ENCODE measurements at regions of chr4 and their contacts with region 1.

Region 1: DNA sequence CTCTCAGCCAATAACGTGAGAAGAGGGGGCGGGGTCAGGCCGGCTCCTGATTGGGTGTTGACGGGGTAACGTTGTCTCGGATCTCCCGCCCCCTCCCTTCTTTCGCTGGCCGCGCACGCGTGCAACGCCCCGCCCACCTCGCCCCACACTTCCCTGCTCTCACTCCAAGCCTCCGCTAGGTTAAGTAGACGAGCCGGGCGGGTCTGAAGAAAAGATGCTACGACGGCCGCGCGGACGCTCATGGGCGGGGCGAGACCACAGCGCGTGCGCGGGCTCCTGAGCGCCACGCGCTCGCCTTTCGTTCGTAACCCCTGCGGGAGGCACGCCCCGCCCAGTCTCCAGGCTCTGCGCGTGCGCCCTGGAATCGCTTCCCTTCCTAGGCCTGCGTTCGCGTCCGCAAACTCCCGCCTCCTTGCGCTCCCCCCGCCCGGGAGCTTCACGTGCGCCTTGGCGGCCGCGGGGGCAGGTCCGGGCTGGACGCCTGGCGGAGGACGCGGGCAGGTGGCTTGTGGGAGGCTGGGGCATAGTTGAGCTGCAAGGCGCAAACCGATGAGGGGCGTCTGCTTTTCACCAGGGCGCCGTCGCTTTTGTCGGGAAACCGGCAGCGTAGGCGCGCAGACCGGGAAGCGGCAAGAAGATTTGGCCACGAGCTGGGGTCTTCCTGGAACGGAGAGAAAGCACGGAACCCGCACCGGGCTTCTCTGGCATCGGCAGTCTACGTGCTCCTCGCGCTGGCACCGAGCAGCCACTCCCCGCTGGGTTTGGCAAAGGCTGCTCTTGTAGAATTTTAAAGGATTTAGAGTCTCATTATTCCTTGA is 467 bp upstream of the PGRMC2 start:
- DNase-seq: peak; percentile 89 to 97
- H3K4me3 ChIP-seq: peak overlapping the region; percentile 87
- H3K27ac ChIP-seq: peak overlapping the region; percentile 88
- H3K4me1 ChIP-seq: peaks cover 28% of the 10 kb centered on the region
- H3K27me3 ChIP-seq: no peaks in the 10 kb centered on the region
- CTCF ChIP-seq: no peak; the same call in 1 of the 2 replicates

Region 2: GRCh38 chr4:128060699-128061565 is 227.1 kb before region 1 on chr4 and contains the start of gene LARP1B:
- CTCF ChIA-PET with region 1: no interaction called
- POLR2A ChIA-PET with region 1: no interaction called
- intact Hi-C with region 1: loop called (anchors 1 kb)
- DNase-seq: peak; percentile 82 to 98
- H3K4me3 ChIP-seq: peak within 1 kb of the TSS; percentile 88
- H3K27ac ChIP-seq: peak within 1 kb of the TSS; percentile 93
- H3K4me1 ChIP-seq: peaks cover 4% of the 10 kb centered on the region; the same call in 1 of the 2 replicates
- H3K27me3 ChIP-seq: no peaks in the 10 kb centered on the region
- CTCF ChIP-seq: no peak
- total RNA-seq, gene LARP1B: 17.7 and 22.0 TPM in 2 replicates

Region 3: DNA sequence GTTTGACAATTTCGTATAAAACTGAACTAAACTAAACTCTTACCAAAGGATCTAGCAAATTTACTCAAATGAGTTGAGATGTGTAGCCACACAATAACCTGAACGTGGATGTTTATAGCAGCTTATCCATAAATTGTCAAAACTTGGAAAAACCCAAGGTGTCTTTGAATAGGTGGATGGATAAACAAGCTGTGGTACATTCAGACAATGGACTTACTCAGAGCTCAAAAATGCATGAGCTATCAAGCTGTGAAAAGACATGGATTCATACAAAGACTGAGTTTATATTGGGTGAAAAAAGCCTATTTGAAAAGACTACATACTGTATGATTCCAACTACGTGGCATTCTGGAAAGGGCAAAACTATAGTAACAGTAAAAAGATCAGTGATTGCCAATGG is 157.5 kb before region 1 on chr4:
- CTCF ChIA-PET with region 1: no interaction called
- POLR2A ChIA-PET with region 1: no interaction called
- intact Hi-C with region 1: no loop called
- DNase-seq: no peak
- H3K4me3 ChIP-seq: no peak overlapping the region
- H3K27ac ChIP-seq: no peak overlapping the region
- H3K4me1 ChIP-seq: no peaks in the 10 kb centered on the region
- H3K27me3 ChIP-seq: no peaks in the 10 kb centered on the region
- CTCF ChIP-seq: no peak

Region 4: DNA sequence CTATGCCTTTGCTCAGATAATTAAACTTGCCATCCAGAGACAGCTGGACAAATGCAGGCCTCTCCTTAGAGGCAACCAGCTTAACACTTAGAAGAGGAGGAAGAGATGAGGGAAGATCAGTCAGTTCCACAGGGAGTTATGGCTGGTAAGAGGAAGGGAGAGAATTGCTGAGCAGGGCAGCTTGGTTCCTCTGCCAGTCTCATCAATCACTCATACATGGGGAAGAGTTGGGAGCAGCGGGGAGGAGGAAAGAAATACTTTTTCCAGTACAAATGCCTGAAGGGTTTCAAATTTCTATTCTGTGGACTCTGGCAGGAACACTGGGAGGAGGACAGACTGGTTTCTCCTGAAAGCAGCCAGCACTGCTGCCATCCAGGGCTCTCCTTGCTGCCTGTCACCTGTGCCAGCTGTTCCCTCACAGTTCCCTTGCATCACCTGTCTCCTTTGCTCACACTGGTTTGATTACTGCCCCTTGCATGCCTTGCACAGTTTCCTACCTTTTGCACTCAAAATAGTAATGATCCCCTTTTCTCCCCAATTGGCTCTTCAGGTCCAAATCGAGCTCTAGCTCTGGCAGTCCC is 60.0 kb before region 1 on chr4:
- CTCF ChIA-PET with region 1: no interaction called
- POLR2A ChIA-PET with region 1: interaction called, 20 read pairs
- intact Hi-C with region 1: loop called (anchors 1 kb)
- DNase-seq: peak; percentile 73 to 76
- H3K4me3 ChIP-seq: no peak overlapping the region
- H3K27ac ChIP-seq: peak overlapping the region; percentile 51
- H3K4me1 ChIP-seq: peaks cover 17% of the 10 kb centered on the region
- H3K27me3 ChIP-seq: no peaks in the 10 kb centered on the region
- CTCF ChIP-seq: no peak

Region 5: DNA sequence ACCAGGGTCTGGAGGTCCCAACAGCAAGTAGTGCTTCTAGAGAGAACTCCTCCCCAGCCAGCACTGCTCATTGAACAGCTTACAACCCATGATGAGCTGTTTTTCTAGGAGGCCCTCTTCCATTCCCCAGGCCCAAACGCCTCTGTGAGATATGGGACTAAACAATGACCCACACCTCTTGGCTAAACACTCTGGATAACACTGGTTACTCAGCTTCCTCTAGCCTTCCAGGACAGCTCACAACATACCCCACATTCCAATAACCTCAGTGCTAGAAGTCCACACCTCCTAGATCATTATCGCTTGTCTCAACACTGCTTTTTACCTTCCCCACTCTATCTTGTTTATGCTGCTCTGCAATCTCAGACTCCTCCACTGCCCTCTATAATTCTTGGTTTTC is 34.9 kb after region 1 on chr4:
- CTCF ChIA-PET with region 1: interaction called, 3 read pairs
- POLR2A ChIA-PET with region 1: interaction called, 23 read pairs
- intact Hi-C with region 1: loop called (anchors 1 kb)
- DNase-seq: peak; percentile 68 to 91
- H3K4me3 ChIP-seq: peak overlapping the region; percentile 33; the same call in 1 of the 2 replicates
- H3K27ac ChIP-seq: peak overlapping the region; percentile 89
- H3K4me1 ChIP-seq: peaks cover 40% of the 10 kb centered on the region
- H3K27me3 ChIP-seq: no peaks in the 10 kb centered on the region
- CTCF ChIP-seq: no peak

Region 6: DNA sequence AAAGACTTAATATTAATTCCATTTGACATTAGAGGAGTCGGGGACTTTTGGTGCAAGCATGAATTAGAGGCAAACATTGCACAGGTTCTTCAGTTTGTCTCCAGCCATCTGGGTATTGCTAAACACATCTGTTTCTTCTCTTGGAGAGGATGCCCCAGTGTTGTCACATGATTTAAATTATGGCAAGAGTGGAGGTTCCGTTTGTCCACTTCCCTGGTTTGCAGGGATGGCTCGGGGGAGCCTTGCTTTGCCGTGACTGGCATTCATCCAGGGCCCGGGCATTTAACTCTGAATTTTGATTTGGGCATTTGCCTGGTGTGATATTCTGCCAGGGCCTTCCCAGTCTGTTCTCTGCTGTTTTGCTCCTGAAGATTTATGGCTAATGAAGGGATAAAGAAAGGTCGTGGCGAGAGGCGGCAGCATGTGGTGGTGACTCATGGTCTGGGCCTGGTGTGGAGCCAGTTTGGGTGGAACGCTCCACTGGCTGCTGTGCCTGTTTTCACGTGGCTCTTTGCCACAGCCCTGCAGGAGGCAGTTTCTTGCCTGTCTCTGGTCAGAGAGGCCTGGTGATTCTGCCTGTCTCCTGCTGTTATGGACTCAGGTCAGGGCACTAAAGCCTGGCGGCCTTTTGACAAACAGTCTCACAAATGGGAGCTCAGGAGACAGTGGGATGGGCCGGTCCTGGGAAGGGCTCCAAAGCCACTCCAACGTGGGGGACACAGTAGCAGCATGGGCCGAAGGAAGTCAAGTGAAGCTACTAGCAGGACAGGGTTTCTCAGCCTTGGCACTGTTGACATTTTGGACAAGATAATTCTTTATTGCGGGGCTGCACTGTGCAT is 98.9 kb after region 1 on chr4:
- CTCF ChIA-PET with region 1: no interaction called
- POLR2A ChIA-PET with region 1: interaction called, 4 read pairs
- intact Hi-C with region 1: loop called (anchors 1 kb)
- DNase-seq: peak; percentile 77 to 87
- H3K4me3 ChIP-seq: no peak overlapping the region
- H3K27ac ChIP-seq: peak overlapping the region; percentile 63
- H3K4me1 ChIP-seq: peaks cover 33% of the 10 kb centered on the region
- H3K27me3 ChIP-seq: no peaks in the 10 kb centered on the region
- CTCF ChIP-seq: no peak

Region 7: GRCh38 chr4:128416921-128417320 is 128.8 kb after region 1 on chr4:
- CTCF ChIA-PET with region 1: no interaction called
- POLR2A ChIA-PET with region 1: no interaction called
- intact Hi-C with region 1: no loop called
- DNase-seq: no peak
- H3K4me3 ChIP-seq: no peak overlapping the region
- H3K27ac ChIP-seq: no peak overlapping the region
- H3K4me1 ChIP-seq: no peaks in the 10 kb centered on the region
- H3K27me3 ChIP-seq: no peaks in the 10 kb centered on the region
- CTCF ChIP-seq: no peak

Region 8: GRCh38 chr4:128809477-128810330 is 521.6 kb after region 1 on chr4 and contains the start of gene JADE1:
- CTCF ChIA-PET with region 1: no interaction called
- POLR2A ChIA-PET with region 1: no interaction called
- intact Hi-C with region 1: loop called (anchors 1 kb)
- DNase-seq: peak; percentile 69 to 90
- H3K4me3 ChIP-seq: peak within 1 kb of the TSS; percentile 84
- H3K27ac ChIP-seq: peak within 1 kb of the TSS; percentile 78
- H3K4me1 ChIP-seq: 0 out of 2 replicates have a peak, but pooled peaks cover 20% of the 10 kb centered on the region
- H3K27me3 ChIP-seq: no peaks in the 10 kb centered on the region
- CTCF ChIP-seq: peak; percentile 62
- total RNA-seq, gene JADE1: 23.1 and 30.7 TPM in 2 replicates

Measured in PC-9 (cell line).